PC-9 (cell line): ENCODE measurements at regions of chr5 and their contacts with region 1.

Region 1: DNA sequence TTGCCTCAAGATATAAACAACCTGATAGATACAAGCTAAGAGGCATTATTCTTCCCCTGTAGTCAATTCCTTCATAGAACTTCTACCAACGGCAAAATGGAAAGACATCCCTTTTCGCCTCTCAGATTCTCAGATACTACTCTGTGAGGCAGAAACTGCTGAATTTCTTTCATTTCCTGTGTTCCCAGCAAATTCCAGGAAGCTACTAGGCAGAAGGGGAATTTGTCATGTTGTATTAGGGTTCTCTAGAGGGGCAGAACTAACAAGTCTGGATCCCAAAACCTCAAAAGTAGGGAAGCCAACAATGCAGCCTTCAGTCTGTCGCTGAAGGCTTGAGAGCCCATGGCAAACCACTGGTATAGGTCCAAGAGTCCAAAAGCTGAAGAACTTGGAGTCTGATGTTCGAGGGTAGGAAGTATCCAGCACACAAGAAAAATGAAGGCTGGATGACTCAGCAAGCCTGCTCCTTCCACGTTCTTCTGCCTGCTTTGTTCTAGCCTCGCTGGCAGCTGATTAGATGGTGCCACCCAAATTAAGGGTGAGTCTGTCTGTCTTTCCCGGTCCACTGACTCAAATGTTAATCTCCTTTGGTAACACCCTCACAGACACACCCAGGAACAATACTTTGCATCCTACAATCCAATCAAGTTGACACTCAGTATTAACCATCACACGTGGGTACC is 15.2 kb downstream of the RNF180 start:
- DNase-seq: no peak
- H3K4me3 ChIP-seq: no peak overlapping the region
- H3K27ac ChIP-seq: no peak overlapping the region
- H3K4me1 ChIP-seq: no peaks in the 10 kb centered on the region
- H3K27me3 ChIP-seq: no peaks in the 10 kb centered on the region
- CTCF ChIP-seq: no peak

Region 2: DNA sequence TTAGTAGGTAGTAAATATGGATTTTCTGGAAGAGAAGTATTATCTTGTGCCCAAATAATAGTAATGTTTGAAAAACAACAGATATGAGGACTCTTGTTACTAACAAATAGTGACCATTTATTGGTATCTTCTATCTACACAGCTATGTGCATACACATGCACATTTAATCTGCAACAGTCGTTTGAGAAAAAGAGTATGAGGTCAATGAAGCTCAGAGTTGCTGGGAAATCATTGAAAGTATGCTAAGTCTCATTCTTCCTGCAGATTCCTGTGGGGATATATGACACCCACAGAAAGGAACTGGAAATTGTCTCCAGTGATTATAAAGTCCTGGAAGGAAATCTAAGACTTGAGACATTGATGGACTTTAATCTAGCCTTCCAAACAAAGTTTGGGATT is 55.3 kb before region 1 on chr5:
- CTCF ChIA-PET with region 1: no interaction called
- POLR2A ChIA-PET with region 1: no interaction called
- intact Hi-C with region 1: no loop called
- DNase-seq: no peak
- H3K4me3 ChIP-seq: no peak overlapping the region
- H3K27ac ChIP-seq: no peak overlapping the region
- H3K4me1 ChIP-seq: no peaks in the 10 kb centered on the region
- H3K27me3 ChIP-seq: no peaks in the 10 kb centered on the region
- CTCF ChIP-seq: no peak

Region 3: GRCh38 chr5:64370721-64371120 is 189.9 kb after region 1 on chr5:
- CTCF ChIA-PET with region 1: interaction called, 11 read pairs
- POLR2A ChIA-PET with region 1: no interaction called
- intact Hi-C with region 1: no loop called
- DNase-seq: no peak
- H3K4me3 ChIP-seq: no peak overlapping the region
- H3K27ac ChIP-seq: no peak overlapping the region
- H3K4me1 ChIP-seq: no peaks in the 10 kb centered on the region
- H3K27me3 ChIP-seq: no peaks in the 10 kb centered on the region
- CTCF ChIP-seq: no peak